Right ventricle myocardium superior (tissue), 1 donor: ENCODE measurements at regions of chr12 and their contacts with region 1.

Region 1: DNA sequence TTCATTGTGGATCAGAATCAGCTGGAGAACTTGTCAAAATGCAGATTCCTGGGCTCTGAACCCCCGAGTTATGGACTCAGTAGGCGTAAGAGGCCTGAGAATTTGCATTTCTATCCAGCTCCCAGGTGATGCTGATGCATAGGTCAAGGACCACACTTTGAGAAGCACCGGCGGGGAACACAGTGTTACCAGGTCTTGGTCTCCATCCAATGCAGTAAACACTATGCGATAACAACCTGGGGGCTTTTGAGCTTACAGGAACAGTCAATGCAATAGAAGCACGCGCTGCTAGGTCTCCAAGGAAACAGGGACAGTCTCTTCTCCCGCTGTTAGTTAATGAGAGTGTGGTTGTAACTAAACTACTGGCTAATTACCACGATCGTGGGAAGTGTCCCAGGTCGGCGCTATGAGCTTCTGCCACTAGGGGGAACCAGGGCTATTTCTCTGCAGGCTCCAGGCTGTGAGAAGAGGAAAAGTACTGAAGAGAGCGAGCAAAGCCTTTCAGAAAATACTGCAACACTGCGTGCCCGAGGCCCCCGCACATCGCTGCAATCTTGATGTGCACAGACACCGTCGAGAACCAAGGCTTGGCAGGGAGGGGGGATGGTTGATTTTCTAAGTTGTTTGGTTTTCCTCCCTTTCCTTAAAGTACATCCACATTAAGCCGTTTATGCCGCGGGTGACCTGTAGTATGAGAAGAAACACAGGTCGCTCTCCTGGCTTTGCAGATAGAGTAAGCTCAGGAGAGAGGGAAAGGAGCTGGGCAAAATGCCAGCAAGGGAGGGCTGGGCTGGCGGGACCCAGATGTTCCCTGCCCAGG is 52.0 kb upstream of the KCNA1 start:
- DNase-seq: peak; percentile 75
- ATAC-seq: peak; percentile 92

Region 2: DNA sequence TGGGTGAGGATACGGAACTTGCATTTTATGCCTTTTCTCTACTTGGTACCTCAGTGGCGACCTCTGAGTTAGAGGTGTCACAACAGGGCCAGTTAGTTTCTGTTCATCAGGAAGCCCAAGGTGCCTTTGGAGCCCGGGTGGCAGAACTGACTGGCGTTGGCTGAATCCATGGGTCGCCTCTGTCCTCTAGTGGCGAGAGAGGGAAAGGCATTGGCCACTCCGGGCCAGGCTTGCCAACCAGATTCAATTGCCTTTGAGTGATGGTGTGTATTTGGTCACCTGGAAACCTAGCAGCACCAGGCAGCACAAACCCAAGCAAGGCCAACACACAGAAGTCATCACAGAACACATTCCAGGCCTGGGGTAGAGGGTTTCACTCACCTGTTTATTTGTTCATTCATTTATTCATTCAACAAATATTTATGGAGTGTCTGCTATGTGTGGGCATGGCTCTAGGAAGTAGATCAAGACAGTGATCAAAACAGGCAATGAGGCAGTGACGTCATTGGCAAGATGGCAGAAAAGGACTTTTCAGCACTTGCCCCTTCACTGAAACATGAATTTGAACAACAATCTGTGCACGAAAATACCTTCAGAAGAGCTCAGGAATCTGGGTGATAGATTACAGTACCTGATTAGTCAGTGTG is 145.5 kb after region 1 on chr12:
- intact Hi-C with region 1: loop called (anchors 2 kb)
- DNase-seq: peak; percentile 67
- ATAC-seq: peak; percentile 97